Activated B cell treated with CpG ODN at 0.5 μM for 24 hours (primary cell): ENCODE measurements at regions of chr1 and their contacts with region 1.

Region 1: GRCh38 chr1:37692078-37692833 is at the start of gene CDCA8:
- DNase-seq: peak; percentile 95
- ATAC-seq: peak; percentile 92
- H3K4me3 Mint-ChIP-seq: peak within 1 kb of the TSS; percentile 93
- H3K27ac Mint-ChIP-seq: peak within 1 kb of the TSS; percentile 91
- H3K4me1 Mint-ChIP-seq: peaks cover 47% of the 10 kb centered on the region
- H3K27me3 Mint-ChIP-seq: no peaks in the 10 kb centered on the region
- CTCF ChIP-seq: no peak
- total RNA-seq, gene CDCA8: 1.9 and 2.9 TPM in 2 replicates

Region 2: GRCh38 chr1:37288900-37289299 is 403.4 kb before region 1 on chr1:
- CTCF ChIA-PET with region 1: no interaction called
- POLR2A ChIA-PET with region 1: no interaction called
- intact Hi-C with region 1: loop called (anchors 5 kb)
- DNase-seq: peak; percentile 55
- ATAC-seq: peak; percentile 98
- H3K4me3 Mint-ChIP-seq: peak overlapping the region; percentile 64
- H3K27ac Mint-ChIP-seq: peak overlapping the region; percentile 97
- H3K4me1 Mint-ChIP-seq: peaks cover 61% of the 10 kb centered on the region
- H3K27me3 Mint-ChIP-seq: no peaks in the 10 kb centered on the region
- CTCF ChIP-seq: no peak

Region 3: GRCh38 chr1:37514350-37515184 is 177.7 kb before region 1 on chr1 and contains the start of gene MEAF6:
- CTCF ChIA-PET with region 1: no interaction called
- POLR2A ChIA-PET with region 1: interaction called, 8 read pairs
- intact Hi-C with region 1: loop called (anchors 1 kb)
- DNase-seq: peak; percentile 93
- ATAC-seq: peak; percentile 95
- H3K4me3 Mint-ChIP-seq: peak within 1 kb of the TSS; percentile 96
- H3K27ac Mint-ChIP-seq: peak within 1 kb of the TSS; percentile 98
- H3K4me1 Mint-ChIP-seq: peaks cover 39% of the 10 kb centered on the region
- H3K27me3 Mint-ChIP-seq: no peaks in the 10 kb centered on the region
- CTCF ChIP-seq: no peak
- total RNA-seq, gene MEAF6: 59.9 and 66.5 TPM in 2 replicates

Region 4: GRCh38 chr1:37612200-37612599 is 80.1 kb before region 1 on chr1:
- CTCF ChIA-PET with region 1: no interaction called
- POLR2A ChIA-PET with region 1: no interaction called
- intact Hi-C with region 1: no loop called
- DNase-seq: no peak
- ATAC-seq: no peak
- H3K4me3 Mint-ChIP-seq: no peak overlapping the region
- H3K27ac Mint-ChIP-seq: no peak overlapping the region
- H3K4me1 Mint-ChIP-seq: no peaks in the 10 kb centered on the region
- H3K27me3 Mint-ChIP-seq: peaks cover 24% of the 10 kb centered on the region
- CTCF ChIP-seq: no peak

Region 5: DNA sequence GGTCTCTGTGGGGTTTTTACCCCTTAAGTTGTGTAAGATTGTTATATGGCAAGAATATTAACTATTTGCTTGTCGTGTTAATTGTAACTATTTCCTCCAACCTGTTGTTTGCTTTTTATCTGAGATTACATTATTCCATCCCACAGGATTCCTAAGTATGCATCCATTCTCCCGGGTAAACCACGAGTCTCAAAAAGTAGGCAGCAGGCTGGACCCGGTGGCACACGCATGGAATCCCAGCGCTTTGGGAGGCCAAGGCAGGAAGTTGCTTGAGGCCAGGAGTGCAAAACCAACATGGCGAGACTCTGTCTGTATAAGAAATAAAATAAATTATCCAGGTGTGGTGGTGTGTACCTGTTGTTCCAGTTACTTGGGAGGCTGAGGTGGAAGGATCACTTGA is 45.0 kb before region 1 on chr1:
- CTCF ChIA-PET with region 1: no interaction called
- POLR2A ChIA-PET with region 1: no interaction called
- intact Hi-C with region 1: no loop called
- DNase-seq: no peak
- ATAC-seq: no peak
- H3K4me3 Mint-ChIP-seq: no peak overlapping the region
- H3K27ac Mint-ChIP-seq: no peak overlapping the region
- H3K4me1 Mint-ChIP-seq: no peaks in the 10 kb centered on the region
- H3K27me3 Mint-ChIP-seq: peaks cover 13% of the 10 kb centered on the region
- CTCF ChIP-seq: no peak

Region 6: GRCh38 chr1:37676281-37677243 is 15.7 kb before region 1 on chr1:
- CTCF ChIA-PET with region 1: interaction called, 4 read pairs
- POLR2A ChIA-PET with region 1: interaction called, 10 read pairs
- intact Hi-C with region 1: no loop called
- DNase-seq: no peak
- ATAC-seq: peak; percentile 54
- H3K4me3 Mint-ChIP-seq: peak overlapping the region; percentile 59
- H3K27ac Mint-ChIP-seq: peak overlapping the region; percentile 92
- H3K4me1 Mint-ChIP-seq: peaks cover 28% of the 10 kb centered on the region
- H3K27me3 Mint-ChIP-seq: peaks cover 4% of the 10 kb centered on the region
- CTCF ChIP-seq: no peak

Region 7: GRCh38 chr1:37859507-37860345 is 167.5 kb after region 1 on chr1 and contains the start of gene MTF1:
- CTCF ChIA-PET with region 1: interaction called, 8 read pairs
- POLR2A ChIA-PET with region 1: interaction called, 24 read pairs
- intact Hi-C with region 1: loop called (anchors 1 kb)
- DNase-seq: peak; percentile 88
- ATAC-seq: peak; percentile 98
- H3K4me3 Mint-ChIP-seq: peak within 1 kb of the TSS; percentile 93
- H3K27ac Mint-ChIP-seq: peak within 1 kb of the TSS; percentile 89
- H3K4me1 Mint-ChIP-seq: peaks cover 29% of the 10 kb centered on the region
- H3K27me3 Mint-ChIP-seq: no peaks in the 10 kb centered on the region
- CTCF ChIP-seq: peak; percentile 19
- total RNA-seq, gene MTF1: 30.5 and 36.2 TPM in 2 replicates

Region 8: DNA sequence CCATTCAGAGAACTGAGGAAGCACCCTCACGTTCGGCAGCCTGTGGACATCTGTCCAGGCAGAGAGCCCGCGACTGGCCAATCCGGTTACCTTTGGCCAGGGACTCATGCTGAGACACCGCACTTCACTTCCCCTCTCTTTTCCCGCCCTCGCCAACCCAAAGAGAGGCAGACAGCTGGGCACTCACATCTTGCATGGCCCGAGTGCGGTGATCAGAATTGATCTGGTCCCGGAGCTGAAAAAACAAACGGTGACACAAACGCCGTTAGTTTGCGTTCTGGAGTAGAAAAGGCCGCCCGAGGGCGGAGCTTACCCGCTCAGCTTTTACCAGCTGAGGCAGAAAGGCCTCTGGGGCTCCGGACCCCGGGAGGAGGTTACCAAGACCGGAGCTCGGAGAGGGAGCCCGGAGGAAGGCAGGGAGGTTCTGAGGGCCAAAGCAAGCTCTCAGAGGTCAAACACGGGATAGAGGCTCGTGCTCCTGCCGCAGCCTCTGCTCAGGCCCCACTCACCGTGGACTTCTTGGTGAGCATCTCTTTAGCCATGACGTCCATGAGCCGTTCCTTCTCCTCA is 297.2 kb after region 1 on chr1:
- CTCF ChIA-PET with region 1: no interaction called
- POLR2A ChIA-PET with region 1: interaction called, 3 read pairs
- intact Hi-C with region 1: loop called (anchors 1 kb)
- DNase-seq: no peak
- ATAC-seq: peak; percentile 26
- H3K4me3 Mint-ChIP-seq: peak overlapping the region; percentile 94
- H3K27ac Mint-ChIP-seq: peak overlapping the region; percentile 88
- H3K4me1 Mint-ChIP-seq: peaks cover 25% of the 10 kb centered on the region
- H3K27me3 Mint-ChIP-seq: peaks cover 2% of the 10 kb centered on the region
- CTCF ChIP-seq: no peak

Region 9: GRCh38 chr1:38873027-38873969 is 1181.0 kb after region 1 on chr1 and contains the start of gene MYCBP:
- CTCF ChIA-PET with region 1: no interaction called
- POLR2A ChIA-PET with region 1: no interaction called
- intact Hi-C with region 1: loop called (anchors 1 kb)
- DNase-seq: peak; percentile 97
- ATAC-seq: peak; percentile 99
- H3K4me3 Mint-ChIP-seq: peak within 1 kb of the TSS; percentile 92
- H3K27ac Mint-ChIP-seq: peak within 1 kb of the TSS; percentile 83
- H3K4me1 Mint-ChIP-seq: peaks cover 23% of the 10 kb centered on the region
- H3K27me3 Mint-ChIP-seq: no peaks in the 10 kb centered on the region
- CTCF ChIP-seq: no peak
- total RNA-seq, gene MYCBP: 18.6 and 19.2 TPM in 2 replicates